ENCODE measurements at regions of chr11 and their contacts with region 1.

Region 1: DNA sequence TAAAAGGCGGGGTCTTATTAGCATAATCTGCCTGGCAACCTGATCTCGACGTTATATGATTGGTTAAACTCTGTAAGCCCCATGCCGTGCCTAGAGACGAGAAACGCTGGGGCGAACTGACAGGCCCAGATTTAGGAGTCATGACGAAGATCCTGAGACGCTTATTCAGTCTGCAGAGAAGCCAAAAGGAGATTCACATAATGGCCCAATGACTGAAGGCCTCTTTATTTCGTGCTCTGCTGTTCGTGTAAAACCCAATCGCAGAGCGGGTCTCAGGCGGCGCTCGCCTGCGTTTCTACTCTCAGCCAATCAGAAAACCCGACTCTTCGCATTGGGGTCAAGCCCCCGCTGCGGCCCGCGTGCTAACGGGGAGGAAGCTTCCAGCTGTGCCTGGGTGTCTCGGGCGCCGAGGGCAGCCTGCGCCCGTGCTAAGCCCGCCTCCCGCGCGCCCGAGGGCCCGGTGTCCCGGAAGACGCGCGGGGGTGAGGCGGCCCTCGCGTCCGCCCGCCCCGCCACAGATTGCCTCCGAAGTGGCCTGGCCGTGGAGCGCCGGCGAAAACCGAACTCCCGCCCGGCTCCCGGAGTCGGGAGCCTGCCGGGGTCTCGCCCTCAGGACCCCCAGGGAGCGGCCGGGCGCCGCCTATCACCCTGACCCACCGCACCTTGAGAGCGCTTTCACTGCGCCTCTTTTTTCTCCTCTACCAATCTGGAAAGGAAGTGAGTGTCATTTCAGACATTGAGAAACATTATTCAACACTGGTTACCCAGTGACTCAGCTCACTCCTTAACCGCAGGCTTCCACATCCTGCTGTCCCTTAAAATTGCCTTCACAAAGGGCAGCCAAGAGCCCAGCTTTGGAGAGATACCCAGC is 446 bp upstream of the PRDM10 start:
- DNase-seq: peak; percentile 97
- ATAC-seq: peak; percentile 88
- H3K4me3 ChIP-seq: peak overlapping the region; percentile 57 to 76
- H3K27ac ChIP-seq: peak overlapping the region; percentile 100
- H3K4me1 ChIP-seq: peaks cover 22% of the 10 kb centered on the region
- H3K27me3 ChIP-seq: no peaks in the 10 kb centered on the region
- CTCF ChIP-seq: no peak

Region 2: GRCh38 chr11:129639300-129639699 is 363.8 kb before region 1 on chr11:
- CTCF ChIA-PET with region 1: no interaction called
- POLR2A ChIA-PET with region 1: interaction called, 10 read pairs
- in situ Hi-C with region 1: no loop called
- intact Hi-C with region 1: no loop called
- DNase-seq: peak; percentile 93
- ATAC-seq: peak; percentile 99
- H3K4me3 ChIP-seq: no peak overlapping the region
- H3K27ac ChIP-seq: peak overlapping the region; percentile 83
- H3K4me1 ChIP-seq: peaks cover 14% of the 10 kb centered on the region
- H3K27me3 ChIP-seq: no peaks in the 10 kb centered on the region
- CTCF ChIP-seq: no peak

Region 3: DNA sequence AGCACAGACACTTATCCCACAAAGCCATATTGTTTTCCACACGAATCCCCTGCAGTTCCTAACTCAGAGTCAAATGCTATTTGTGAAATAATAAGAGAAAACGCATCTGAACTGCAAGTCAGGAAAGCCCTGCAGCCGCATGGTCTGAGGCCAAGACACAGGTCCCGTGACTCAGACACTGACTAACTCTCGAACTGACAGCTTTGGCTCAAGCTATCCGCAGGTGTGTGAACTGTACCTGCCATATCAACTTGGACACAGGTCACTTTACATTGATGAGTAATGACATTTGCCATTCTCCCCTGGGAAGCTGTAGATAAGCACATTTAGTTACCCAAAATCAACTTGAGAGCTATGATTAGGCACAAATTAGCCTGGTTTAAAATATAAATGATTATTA is 72.8 kb before region 1 on chr11:
- CTCF ChIA-PET with region 1: no interaction called
- POLR2A ChIA-PET with region 1: no interaction called
- in situ Hi-C with region 1: no loop called
- intact Hi-C with region 1: no loop called
- DNase-seq: no peak
- ATAC-seq: no peak
- H3K4me3 ChIP-seq: no peak overlapping the region
- H3K27ac ChIP-seq: no peak overlapping the region
- H3K4me1 ChIP-seq: no peaks in the 10 kb centered on the region
- H3K27me3 ChIP-seq: no peaks in the 10 kb centered on the region
- CTCF ChIP-seq: no peak

Region 4: GRCh38 chr11:129950101-129951091 is 52.7 kb before region 1 on chr11:
- CTCF ChIA-PET with region 1: no interaction called
- POLR2A ChIA-PET with region 1: interaction called, 10 read pairs
- in situ Hi-C with region 1: no loop called
- intact Hi-C with region 1: no loop called
- DNase-seq: no peak
- ATAC-seq: no peak
- H3K4me3 ChIP-seq: no peak overlapping the region
- H3K27ac ChIP-seq: no peak overlapping the region
- H3K4me1 ChIP-seq: no peaks in the 10 kb centered on the region
- H3K27me3 ChIP-seq: no peaks in the 10 kb centered on the region
- CTCF ChIP-seq: no peak

Region 5: GRCh38 chr11:130022798-130023583 is 19.9 kb after region 1 on chr11:
- CTCF ChIA-PET with region 1: interaction called, 13 read pairs
- POLR2A ChIA-PET with region 1: no interaction called
- in situ Hi-C with region 1: no loop called
- intact Hi-C with region 1: no loop called
- DNase-seq: peak; percentile 47
- ATAC-seq: peak; percentile 87
- H3K4me3 ChIP-seq: no peak overlapping the region
- H3K27ac ChIP-seq: peak overlapping the region; percentile 67
- H3K4me1 ChIP-seq: peaks cover 17% of the 10 kb centered on the region
- H3K27me3 ChIP-seq: no peaks in the 10 kb centered on the region
- CTCF ChIP-seq: no peak

Region 6: DNA sequence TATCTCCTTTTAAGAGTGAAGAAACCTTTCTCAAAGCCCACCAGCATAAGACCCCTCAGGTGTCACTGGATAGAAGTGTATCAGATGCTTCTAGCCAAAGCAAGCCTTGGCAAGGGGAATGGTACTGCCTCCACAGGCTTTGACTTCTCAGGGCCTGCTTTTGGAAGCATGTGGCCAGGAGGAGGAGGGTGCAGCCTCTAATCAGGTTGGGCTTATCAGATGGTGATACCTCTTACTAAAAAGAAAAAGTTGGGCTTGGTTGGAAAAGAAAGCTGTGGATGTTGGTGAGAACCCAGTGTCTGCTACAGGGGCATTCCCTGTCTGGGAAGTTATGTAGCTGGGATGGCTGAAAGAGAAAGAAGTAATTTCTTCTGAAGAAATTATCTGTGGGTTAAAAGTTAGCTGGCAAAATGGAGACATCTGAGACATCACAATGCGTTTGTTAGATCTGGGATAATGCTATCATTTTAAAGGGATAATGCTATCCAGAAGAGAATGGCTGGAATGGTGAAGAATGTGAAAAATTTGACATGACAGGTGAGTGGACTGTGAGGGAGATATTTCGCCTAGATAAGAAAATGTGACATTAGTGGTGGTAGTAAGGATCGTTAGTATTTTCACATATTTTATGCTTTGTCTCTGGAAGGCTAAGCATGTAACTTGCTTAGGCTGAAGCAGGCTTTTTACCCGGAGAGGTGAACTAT is 73.8 kb after region 1 on chr11:
- CTCF ChIA-PET with region 1: interaction called, 5 read pairs
- POLR2A ChIA-PET with region 1: interaction called, 10 read pairs
- in situ Hi-C with region 1: no loop called
- intact Hi-C with region 1: no loop called
- DNase-seq: no peak
- ATAC-seq: peak; percentile 44; the same call in 1 of the 2 replicates
- H3K4me3 ChIP-seq: no peak overlapping the region
- H3K27ac ChIP-seq: no peak overlapping the region
- H3K4me1 ChIP-seq: peaks cover 31% of the 10 kb centered on the region
- H3K27me3 ChIP-seq: no peaks in the 10 kb centered on the region
- CTCF ChIP-seq: no peak

Region 7: GRCh38 chr11:130087294-130087926 is 84.3 kb after region 1 on chr11:
- CTCF ChIA-PET with region 1: no interaction called
- POLR2A ChIA-PET with region 1: no interaction called
- in situ Hi-C with region 1: no loop called
- intact Hi-C with region 1: no loop called
- DNase-seq: no peak
- ATAC-seq: no peak
- H3K4me3 ChIP-seq: no peak overlapping the region
- H3K27ac ChIP-seq: 0 out of 2 replicates have a peak overlapping the region, but pooled peaks have one; percentile 20
- H3K4me1 ChIP-seq: peaks cover 38% of the 10 kb centered on the region
- H3K27me3 ChIP-seq: no peaks in the 10 kb centered on the region
- CTCF ChIP-seq: no peak

Region 8: DNA sequence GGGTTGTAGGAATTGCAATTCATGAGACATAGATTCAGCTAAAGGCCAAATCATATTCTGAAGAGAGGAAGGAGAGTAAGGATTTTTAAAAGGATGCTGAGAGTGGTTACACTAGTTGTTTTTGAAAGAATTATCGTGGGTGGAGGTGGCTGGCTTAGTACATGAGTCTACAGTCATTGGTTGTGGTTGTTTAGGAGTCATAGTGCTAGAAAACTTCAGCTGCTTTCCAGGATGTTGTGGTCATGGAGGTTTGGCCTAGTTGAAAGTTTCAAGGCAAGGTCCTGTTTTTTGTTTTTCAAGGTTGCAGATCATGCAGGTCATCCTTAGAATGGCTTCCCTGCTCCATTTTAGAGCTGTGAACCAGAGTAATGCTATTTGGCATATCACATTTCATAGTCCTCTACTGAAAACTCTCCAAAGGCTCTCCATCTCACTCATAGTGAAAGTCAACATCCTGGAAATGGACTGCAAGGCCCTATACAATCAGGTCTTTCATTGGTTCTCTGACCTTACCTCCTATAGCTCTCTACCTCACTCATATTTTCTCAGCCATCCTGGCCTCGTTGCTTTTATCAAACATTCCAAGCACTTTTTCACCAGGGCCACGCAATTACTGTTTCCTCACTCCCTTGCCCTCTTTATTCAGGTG is 337.7 kb after region 1 on chr11:
- CTCF ChIA-PET with region 1: no interaction called
- POLR2A ChIA-PET with region 1: interaction called, 11 read pairs
- in situ Hi-C with region 1: no loop called
- intact Hi-C with region 1: no loop called
- DNase-seq: no peak
- ATAC-seq: no peak
- H3K4me3 ChIP-seq: no peak overlapping the region
- H3K27ac ChIP-seq: no peak overlapping the region
- H3K4me1 ChIP-seq: no peaks in the 10 kb centered on the region
- H3K27me3 ChIP-seq: no peaks in the 10 kb centered on the region; the same call in 1 of the 2 replicates
- CTCF ChIP-seq: no peak